Activated CD4-positive, alpha-beta memory T cell treated with anti-CD3 and anti-CD28 coated beads, Interleukin-2, amount 10 ng/mL, durations not matched to agents 7 days and 5 days (primary cell): ENCODE measurements at regions of chr3 and their contacts with region 1.

Region 1: DNA sequence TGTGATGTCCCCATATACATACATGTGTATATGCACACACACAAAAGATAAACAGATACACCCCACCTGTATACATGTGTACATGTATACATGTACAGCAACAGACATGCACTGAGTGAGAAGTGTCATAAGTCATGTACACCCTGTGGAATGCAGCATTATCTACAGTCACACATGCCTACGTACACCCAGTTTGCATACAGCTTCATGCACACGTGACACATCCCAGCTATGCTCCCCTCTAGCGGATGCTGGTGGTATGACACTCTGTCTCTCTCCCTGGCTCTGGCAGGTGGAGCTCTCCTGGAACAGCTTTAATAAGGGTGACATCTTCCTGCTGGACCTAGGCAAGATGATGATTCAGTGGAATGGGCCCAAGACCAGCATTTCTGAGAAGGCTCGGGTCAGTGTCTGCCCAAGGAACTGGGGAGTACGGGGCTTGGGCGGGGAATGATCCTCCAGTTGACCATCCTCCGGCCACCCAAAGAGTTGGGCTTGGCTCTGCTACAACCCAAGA is 6.3 kb downstream of the VILL start:
- DNase-seq: peak; percentile 87
- H3K4me3 Mint-ChIP-seq: no peak overlapping the region
- H3K27ac Mint-ChIP-seq: peak overlapping the region; percentile 73
- H3K4me1 Mint-ChIP-seq: peaks cover 66% of the 10 kb centered on the region
- H3K27me3 Mint-ChIP-seq: no peaks in the 10 kb centered on the region

Region 2: GRCh38 chr3:37986479-37987314 is 10.1 kb before region 1 on chr3:
- CTCF ChIA-PET with region 1: interaction called, 10 read pairs
- POLR2A ChIA-PET with region 1: no interaction called
- DNase-seq: no peak
- H3K4me3 Mint-ChIP-seq: no peak overlapping the region
- H3K27ac Mint-ChIP-seq: no peak overlapping the region
- H3K4me1 Mint-ChIP-seq: no peaks in the 10 kb centered on the region
- H3K27me3 Mint-ChIP-seq: peaks cover 2% of the 10 kb centered on the region